Left cardiac atrium (tissue), 4 donors: ENCODE measurements at regions of chr7 and their contacts with region 1.

Region 1: GRCh38 chr7:151309311-151309710 is 32.3 kb upstream of the NUB1 start:
- DNase-seq: no peak
- ATAC-seq: no peak

Region 2: DNA sequence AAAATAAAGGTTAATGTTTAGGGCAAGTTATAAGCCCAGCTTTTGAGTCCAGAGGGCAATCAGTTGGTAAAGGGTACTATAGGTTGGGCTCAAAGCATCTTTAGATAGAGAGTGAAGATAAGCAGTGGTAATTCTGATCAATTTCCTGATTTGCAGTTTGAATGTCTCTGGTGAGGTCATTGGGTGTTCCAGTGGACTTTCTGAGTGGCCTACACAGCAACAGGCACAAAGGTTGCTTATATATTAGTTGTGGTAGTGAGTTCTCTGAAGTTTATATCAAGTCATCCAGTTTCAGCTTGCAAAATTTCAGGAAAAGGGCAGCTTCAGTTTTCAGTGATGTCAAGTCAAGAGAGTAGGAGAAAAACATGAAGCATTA is 543.0 kb before region 1 on chr7:
- intact Hi-C with region 1: no loop called
- DNase-seq: no peak
- ATAC-seq: no peak

Region 3: GRCh38 chr7:151123822-151124464 is 185.4 kb before region 1 on chr7:
- intact Hi-C with region 1: loop called (anchors 2 to 5 kb)
- DNase-seq: peak; percentile 89
- ATAC-seq: peak; percentile 77 to 80

Region 4: GRCh38 chr7:151172273-151173141 is 136.8 kb before region 1 on chr7:
- intact Hi-C with region 1: loop called in 1 of 2 experiments (anchors 5 kb)
- DNase-seq: peak; percentile 80
- ATAC-seq: peak; percentile 66 to 71

Region 5: GRCh38 chr7:151245360-151246101 is 63.8 kb before region 1 on chr7:
- intact Hi-C with region 1: loop called (anchors 5 kb)
- DNase-seq: peak; percentile 61
- ATAC-seq: peak; percentile 14 to 18

Region 6: GRCh38 chr7:151806204-151806603 is 496.9 kb after region 1 on chr7:
- intact Hi-C with region 1: no loop called
- DNase-seq: no peak
- ATAC-seq: no peak